ENCODE measurements at regions of chr13 and their contacts with region 1.

Region 1: GRCh38 chr13:27362064-27362883 is 62.1 kb upstream of the GTF3A start:
- DNase-seq: peak; percentile 95
- ATAC-seq: peak; percentile 93
- H3K4me3 Mint-ChIP-seq: peak overlapping the region; percentile 80
- H3K27ac Mint-ChIP-seq: no peak overlapping the region
- H3K4me1 Mint-ChIP-seq: peaks cover 24% of the 10 kb centered on the region
- H3K27me3 Mint-ChIP-seq: no peaks in the 10 kb centered on the region; the same call in none of the 2 replicates
- CTCF ChIP-seq: peak; percentile 88

Region 2: DNA sequence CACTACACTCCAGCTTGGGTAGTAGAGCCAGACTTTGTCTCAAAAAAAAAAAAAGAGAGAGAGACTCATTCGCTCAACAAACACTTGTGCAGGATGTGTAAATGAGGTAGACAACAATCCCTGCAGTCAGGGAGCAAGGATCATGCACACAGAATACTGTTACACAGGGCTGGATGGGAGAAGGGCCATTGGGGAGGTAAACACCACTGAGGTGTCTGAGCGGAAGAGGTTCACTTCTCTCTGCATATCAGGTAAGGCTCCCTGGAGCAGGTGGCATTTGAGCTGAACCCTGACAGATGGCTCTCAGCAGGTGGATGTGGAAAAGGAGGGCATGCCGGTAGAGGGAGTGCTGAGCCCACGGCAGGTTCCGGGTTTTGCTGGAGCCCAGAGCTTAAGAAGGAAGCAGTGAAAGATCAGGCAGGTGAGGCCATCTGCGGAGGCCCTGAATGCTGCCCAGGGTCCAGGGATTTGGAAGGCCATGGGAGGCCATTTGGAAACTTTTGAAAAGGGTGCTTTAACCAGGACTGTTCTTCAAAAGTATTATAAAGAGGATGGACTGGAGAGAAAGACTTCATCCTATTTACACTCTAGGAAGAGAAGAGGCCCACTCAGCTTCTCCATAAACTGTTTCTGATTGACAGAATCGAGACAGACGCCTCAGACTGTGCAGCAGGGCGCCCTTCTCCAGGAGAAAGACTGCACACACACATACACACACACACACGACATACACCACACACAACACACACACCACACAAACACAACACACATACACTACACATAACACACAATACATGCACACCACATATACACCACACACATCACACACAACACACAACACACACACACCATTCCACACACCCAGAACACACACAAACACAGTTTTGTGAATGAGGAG is 390.0 kb before region 1 on chr13:
- CTCF ChIA-PET with region 1: interaction called, 22 read pairs
- POLR2A ChIA-PET with region 1: no interaction called
- DNase-seq: peak; percentile 61
- ATAC-seq: peak; percentile 89
- H3K4me3 Mint-ChIP-seq: no peak overlapping the region
- H3K27ac Mint-ChIP-seq: no peak overlapping the region
- H3K4me1 Mint-ChIP-seq: no peaks in the 10 kb centered on the region; the same call in 1 of the 2 replicates
- H3K27me3 Mint-ChIP-seq: no peaks in the 10 kb centered on the region
- CTCF ChIP-seq: peak; percentile 15; the same call in 1 of the 2 replicates

Region 3: GRCh38 chr13:27006519-27007161 is 355.6 kb before region 1 on chr13:
- CTCF ChIA-PET with region 1: interaction called, 20 read pairs
- POLR2A ChIA-PET with region 1: no interaction called
- DNase-seq: peak; percentile 42
- ATAC-seq: peak; percentile 84
- H3K4me3 Mint-ChIP-seq: peak overlapping the region; percentile 71
- H3K27ac Mint-ChIP-seq: no peak overlapping the region
- H3K4me1 Mint-ChIP-seq: peaks cover 24% of the 10 kb centered on the region
- H3K27me3 Mint-ChIP-seq: peaks cover 24% of the 10 kb centered on the region
- CTCF ChIP-seq: no peak

Region 4: GRCh38 chr13:27117158-27117557 is 245.1 kb before region 1 on chr13:
- CTCF ChIA-PET with region 1: no interaction called
- POLR2A ChIA-PET with region 1: no interaction called
- DNase-seq: no peak
- ATAC-seq: no peak
- H3K4me3 Mint-ChIP-seq: no peak overlapping the region
- H3K27ac Mint-ChIP-seq: peak overlapping the region; percentile 8; the same call in 1 of the 2 replicates
- H3K4me1 Mint-ChIP-seq: peaks cover 51% of the 10 kb centered on the region
- H3K27me3 Mint-ChIP-seq: no peaks in the 10 kb centered on the region; the same call in 1 of the 2 replicates
- CTCF ChIP-seq: no peak

Region 5: DNA sequence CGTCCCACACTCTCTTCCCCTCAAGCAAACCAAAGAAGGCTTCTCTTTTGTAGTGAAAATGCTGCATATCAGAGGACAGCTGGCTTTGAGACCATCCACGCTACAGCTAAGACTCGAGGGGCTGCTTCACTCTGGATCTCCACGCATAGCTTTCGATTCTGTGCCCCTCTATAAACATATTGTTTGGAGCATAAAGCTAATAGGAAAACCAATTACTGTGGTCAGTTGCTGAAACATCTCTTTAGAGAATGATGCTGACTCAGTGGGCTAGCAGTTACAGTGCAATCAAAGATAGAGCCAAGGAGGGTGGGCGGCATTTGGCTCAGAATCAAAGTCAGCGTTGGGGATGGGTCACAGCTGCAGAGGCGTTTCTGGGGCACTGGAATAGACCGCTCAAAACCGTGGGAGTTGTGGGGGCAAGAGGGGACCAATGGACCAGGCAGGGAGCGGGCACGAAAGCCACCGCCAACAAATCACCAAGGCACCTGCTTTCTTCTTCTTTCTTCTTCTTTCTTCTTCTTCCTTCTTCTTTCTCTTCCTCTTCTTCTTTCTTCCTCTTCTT is 15.0 kb before region 1 on chr13:
- CTCF ChIA-PET with region 1: interaction called, 91 read pairs
- POLR2A ChIA-PET with region 1: no interaction called
- DNase-seq: no peak
- ATAC-seq: no peak
- H3K4me3 Mint-ChIP-seq: no peak overlapping the region
- H3K27ac Mint-ChIP-seq: no peak overlapping the region
- H3K4me1 Mint-ChIP-seq: no peaks in the 10 kb centered on the region
- H3K27me3 Mint-ChIP-seq: no peaks in the 10 kb centered on the region; the same call in 1 of the 2 replicates
- CTCF ChIP-seq: no peak

Region 6: GRCh38 chr13:27424246-27425157 is 62.2 kb after region 1 on chr13 and contains the start of gene GTF3A:
- CTCF ChIA-PET with region 1: interaction called, 57 read pairs
- POLR2A ChIA-PET with region 1: no interaction called
- DNase-seq: peak; percentile 78
- ATAC-seq: peak; percentile 84
- H3K4me3 Mint-ChIP-seq: peak within 1 kb of the TSS; percentile 80
- H3K27ac Mint-ChIP-seq: peak within 1 kb of the TSS; percentile 20
- H3K4me1 Mint-ChIP-seq: peaks cover 22% of the 10 kb centered on the region
- H3K27me3 Mint-ChIP-seq: peaks cover 19% of the 10 kb centered on the region
- CTCF ChIP-seq: no peak
- total RNA-seq, gene GTF3A: 77.0 to 88.7 TPM (median 78.4 TPM) in 3 replicates

Region 7: GRCh38 chr13:27775943-27776342 is 413.7 kb after region 1 on chr13:
- CTCF ChIA-PET with region 1: interaction called, 11 read pairs
- POLR2A ChIA-PET with region 1: no interaction called
- DNase-seq: peak; percentile 29
- ATAC-seq: peak; percentile 83
- H3K4me3 Mint-ChIP-seq: no peak overlapping the region
- H3K27ac Mint-ChIP-seq: no peak overlapping the region
- H3K4me1 Mint-ChIP-seq: peaks cover 21% of the 10 kb centered on the region
- H3K27me3 Mint-ChIP-seq: peaks cover 71% of the 10 kb centered on the region
- CTCF ChIP-seq: no peak